GM12878 (cell line): ENCODE measurements at regions of chrX and their contacts with region 1.

Region 1: GRCh38 chrX:152197465-152197864 is 59.1 kb upstream of the MAGEA10 start:
- DNase-seq: no peak
- ATAC-seq: no peak
- H3K4me3 ChIP-seq: no peak overlapping the region
- H3K27ac ChIP-seq: no peak overlapping the region
- H3K4me1 ChIP-seq: no peaks in the 10 kb centered on the region
- H3K27me3 ChIP-seq: no peaks in the 10 kb centered on the region
- CTCF ChIP-seq: no peak
- EP300 ChIP-seq: no peak
- POLR2A ChIP-seq: no peak
- RAD21 ChIP-seq: no peak

Region 2: DNA sequence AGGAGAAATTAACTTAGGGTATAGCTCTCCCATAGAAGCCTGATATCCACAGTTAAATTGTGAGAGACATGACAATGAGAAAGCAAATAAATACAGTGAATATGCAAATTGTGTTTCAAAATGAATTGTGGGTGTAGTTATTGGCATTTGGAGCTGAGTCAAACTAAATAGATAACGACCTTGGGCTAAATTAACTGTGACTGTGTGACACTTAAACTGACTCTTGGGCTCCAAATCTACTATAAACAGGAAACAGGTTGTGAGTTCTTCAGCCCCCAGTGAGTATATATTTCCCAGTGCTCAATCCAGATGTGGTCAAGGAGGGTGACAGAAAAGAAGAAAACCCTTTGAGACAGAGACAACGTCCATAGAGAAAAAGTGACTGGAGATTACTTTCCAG is 47.8 kb before region 1 on chrX:
- CTCF ChIA-PET with region 1: no interaction called
- POLR2A ChIA-PET with region 1: no interaction called
- RAD21 ChIA-PET with region 1: no interaction called
- SMC1A ChIA-PET with region 1: no interaction called
- in situ Hi-C with region 1: no loop called
- intact Hi-C with region 1: no loop called
- DNase-seq: no peak
- ATAC-seq: no peak
- H3K4me3 ChIP-seq: no peak overlapping the region
- H3K27ac ChIP-seq: no peak overlapping the region
- H3K4me1 ChIP-seq: no peaks in the 10 kb centered on the region
- H3K27me3 ChIP-seq: no peaks in the 10 kb centered on the region
- CTCF ChIP-seq: no peak
- EP300 ChIP-seq: no peak
- POLR2A ChIP-seq: no peak
- RAD21 ChIP-seq: no peak

Region 3: DNA sequence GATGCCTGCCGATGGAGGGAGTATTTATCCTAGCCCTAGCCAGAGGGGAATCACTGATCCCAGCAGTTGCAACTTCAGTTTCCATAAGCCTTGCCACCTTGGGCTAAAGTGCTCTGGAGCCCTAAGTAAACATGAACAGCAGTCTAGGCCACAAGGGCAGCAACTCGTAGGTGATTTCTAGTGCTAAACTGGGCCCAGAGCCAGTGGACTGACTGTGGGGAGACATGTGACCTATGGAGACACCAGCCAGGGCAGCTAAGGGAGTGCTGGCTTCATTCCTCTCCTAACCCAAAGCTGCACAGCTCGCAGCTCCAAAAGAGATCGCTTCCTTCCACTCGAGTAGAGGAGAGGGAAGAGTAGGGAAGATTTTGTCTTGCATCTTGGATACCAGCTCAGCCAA is 61.7 kb after region 1 on chrX:
- CTCF ChIA-PET with region 1: no interaction called
- POLR2A ChIA-PET with region 1: no interaction called
- RAD21 ChIA-PET with region 1: no interaction called
- SMC1A ChIA-PET with region 1: no interaction called
- in situ Hi-C with region 1: loop called (anchors 10 kb)
- intact Hi-C with region 1: no loop called
- DNase-seq: no peak
- ATAC-seq: no peak
- H3K4me3 ChIP-seq: no peak overlapping the region
- H3K27ac ChIP-seq: no peak overlapping the region
- H3K4me1 ChIP-seq: no peaks in the 10 kb centered on the region
- H3K27me3 ChIP-seq: no peaks in the 10 kb centered on the region
- CTCF ChIP-seq: no peak
- EP300 ChIP-seq: no peak
- POLR2A ChIP-seq: no peak
- RAD21 ChIP-seq: no peak